ENCODE measurements at regions of chr14 and their contacts with region 1.

Region 1: DNA sequence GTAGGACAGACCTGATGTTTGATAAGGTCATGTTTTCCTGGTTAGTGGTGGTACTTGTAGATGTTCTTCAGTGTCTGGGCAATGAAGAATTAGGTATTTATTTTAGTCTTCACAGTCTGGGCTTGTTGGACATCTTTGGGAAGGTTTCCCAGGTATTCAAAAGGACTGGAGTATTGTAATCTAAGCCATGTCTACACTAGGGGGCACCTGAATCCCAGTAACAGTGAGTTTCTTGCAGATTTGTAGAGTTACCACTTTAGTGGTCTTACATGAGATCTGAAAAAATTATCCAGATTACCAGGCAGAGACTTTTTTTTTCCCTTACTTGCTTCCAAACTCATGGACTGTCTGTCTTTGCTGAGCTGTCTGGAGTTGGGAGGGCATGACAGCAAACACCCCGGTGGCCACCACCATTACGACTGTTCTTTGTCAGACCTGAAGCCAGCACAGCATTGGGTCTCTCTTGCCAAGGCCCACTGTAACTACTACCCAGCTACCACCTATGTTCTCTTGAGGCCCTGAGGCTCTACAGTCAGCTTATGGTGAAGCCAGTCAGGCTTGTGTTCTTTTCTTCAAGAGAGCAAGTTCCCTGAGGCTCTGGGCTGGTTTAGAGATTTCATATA is 820.7 kb upstream of the FBXO33 start:
- DNase-seq: no peak
- H3K4me3 ChIP-seq: no peak overlapping the region
- H3K27ac ChIP-seq: no peak overlapping the region
- H3K4me1 ChIP-seq: no peaks in the 10 kb centered on the region
- H3K27me3 ChIP-seq: no peaks in the 10 kb centered on the region
- CTCF ChIP-seq: no peak
- EP300 ChIP-seq: no peak
- POLR2A ChIP-seq: no peak

Region 2: DNA sequence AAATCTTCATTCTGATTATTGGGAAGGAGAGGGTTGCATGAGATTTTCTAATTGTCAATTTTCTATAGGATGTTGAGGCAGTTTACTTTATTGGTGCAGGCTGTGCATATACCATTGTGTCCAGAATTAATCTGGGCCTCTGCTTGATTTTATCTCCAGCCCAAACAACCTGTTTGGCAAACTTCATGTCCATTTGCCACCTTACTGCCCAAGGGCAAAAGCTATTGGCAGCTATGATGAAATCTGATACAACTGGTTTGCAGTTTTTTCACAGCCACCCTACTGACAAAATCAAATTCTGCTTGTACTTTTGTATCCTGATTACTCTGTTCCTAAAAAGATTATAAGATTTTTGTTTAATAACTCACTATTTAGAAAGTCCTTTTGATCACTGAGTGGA is 31.5 kb before region 1 on chr14:
- intact Hi-C with region 1: loop called in 1 of 4 experiments (anchors 2 kb)
- DNase-seq: no peak
- H3K4me3 ChIP-seq: no peak overlapping the region
- H3K27ac ChIP-seq: no peak overlapping the region
- H3K4me1 ChIP-seq: no peaks in the 10 kb centered on the region
- H3K27me3 ChIP-seq: no peaks in the 10 kb centered on the region
- CTCF ChIP-seq: no peak
- EP300 ChIP-seq: no peak
- POLR2A ChIP-seq: no peak

Region 3: GRCh38 chr14:40318211-40318719 is 65.3 kb after region 1 on chr14:
- intact Hi-C with region 1: no loop called
- DNase-seq: no peak
- H3K4me3 ChIP-seq: no peak overlapping the region
- H3K27ac ChIP-seq: no peak overlapping the region
- H3K4me1 ChIP-seq: no peaks in the 10 kb centered on the region
- H3K27me3 ChIP-seq: no peaks in the 10 kb centered on the region
- CTCF ChIP-seq: no peak
- EP300 ChIP-seq: no peak
- POLR2A ChIP-seq: no peak

Region 4: DNA sequence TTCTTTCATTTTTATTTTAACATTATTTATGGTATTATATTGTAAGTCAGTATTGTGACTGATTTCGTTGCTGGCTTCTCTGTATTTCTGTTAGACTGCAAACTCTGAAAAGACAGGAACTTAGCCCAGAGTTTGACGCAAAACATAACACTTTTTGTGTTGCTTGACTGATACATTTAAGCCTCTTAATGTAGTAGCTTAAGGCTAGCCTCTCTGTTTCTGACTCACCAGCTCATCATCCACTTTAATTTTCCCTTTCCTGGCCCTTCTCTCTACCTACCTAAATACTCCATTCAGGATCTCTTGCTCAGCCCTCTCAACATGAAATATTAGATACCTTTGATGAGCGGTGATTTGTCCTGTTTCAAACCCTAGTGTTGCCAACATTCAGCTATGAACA is 1774.3 kb after region 1 on chr14:
- intact Hi-C with region 1: loop called in 1 of 4 experiments (anchors 5 kb)
- DNase-seq: no peak
- H3K4me3 ChIP-seq: no peak overlapping the region
- H3K27ac ChIP-seq: no peak overlapping the region
- H3K4me1 ChIP-seq: no peaks in the 10 kb centered on the region
- H3K27me3 ChIP-seq: no peaks in the 10 kb centered on the region
- CTCF ChIP-seq: no peak
- EP300 ChIP-seq: no peak
- POLR2A ChIP-seq: no peak

Measured in ovary (tissue), 10 donors.